Breast epithelium (tissue), 4 donors: ENCODE measurements at regions of chr11 and their contacts with region 1.

Region 1: GRCh38 chr11:70358753-70359152 is 39.6 kb upstream of the CTTN start:
- DNase-seq: no peak
- H3K4me3 ChIP-seq: no peak overlapping the region
- H3K27ac ChIP-seq: no peak overlapping the region
- H3K4me1 ChIP-seq: no peaks in the 10 kb centered on the region
- H3K27me3 ChIP-seq: no peaks in the 10 kb centered on the region
- CTCF ChIP-seq: no peak
- POLR2A ChIP-seq: no peak

Region 2: DNA sequence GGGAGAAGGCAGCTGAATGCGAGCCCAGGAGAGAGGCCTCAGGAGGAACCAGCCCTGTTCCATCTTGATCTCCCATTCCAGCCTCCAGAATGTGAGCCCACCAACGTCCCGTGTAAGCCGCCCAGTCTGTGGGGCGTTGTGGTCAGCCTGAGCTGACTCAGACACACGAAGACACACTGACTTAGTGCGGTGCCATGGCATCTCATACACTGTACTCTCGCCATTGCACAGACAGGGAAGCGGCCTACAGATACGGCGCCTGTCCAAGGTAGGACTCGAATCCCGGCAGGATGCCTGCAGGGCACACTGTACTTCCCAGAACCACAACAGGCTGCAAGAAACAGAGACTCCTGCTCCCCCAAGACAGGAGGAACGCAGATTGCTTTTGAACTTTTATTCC is 219.2 kb after region 1 on chr11:
- intact Hi-C with region 1: loop called (anchors 10 kb)
- DNase-seq: no peak
- H3K4me3 ChIP-seq: no peak overlapping the region
- H3K27ac ChIP-seq: no peak overlapping the region
- H3K4me1 ChIP-seq: no peaks in the 10 kb centered on the region
- H3K27me3 ChIP-seq: no peaks in the 10 kb centered on the region
- CTCF ChIP-seq: no peak
- POLR2A ChIP-seq: no peak